ENCODE measurements at regions of chrX and their contacts with region 1.

Region 1: GRCh38 chrX:12447448-12448064 is 309.3 kb downstream of the FRMPD4 start:
- DNase-seq: peak; percentile 80
- H3K4me3 Mint-ChIP-seq: no peak overlapping the region
- H3K27ac Mint-ChIP-seq: peak overlapping the region; percentile 92
- H3K4me1 Mint-ChIP-seq: peaks cover 18% of the 10 kb centered on the region
- H3K27me3 Mint-ChIP-seq: no peaks in the 10 kb centered on the region
- CTCF ChIP-seq: peak; percentile 22

Region 2: DNA sequence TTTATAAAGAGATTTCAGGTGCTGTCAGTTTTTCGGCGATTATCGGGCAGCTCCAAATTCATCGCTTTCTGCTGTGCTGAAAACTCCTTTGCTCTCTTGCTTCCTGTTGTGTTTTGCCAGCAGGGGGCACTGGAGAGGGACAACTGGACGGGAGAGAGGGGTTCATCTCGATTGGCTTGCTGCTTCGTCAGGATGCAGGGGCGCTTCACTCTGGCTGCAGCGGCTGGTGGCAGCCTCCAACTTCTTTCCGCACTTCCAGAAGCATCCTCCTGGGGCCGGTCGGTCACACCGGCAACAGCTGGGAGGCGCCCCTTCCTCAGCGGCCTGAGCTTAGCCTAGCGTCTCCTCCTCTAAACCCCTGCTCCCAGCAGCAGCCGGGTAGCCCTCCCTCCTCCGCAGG is 660.0 kb before region 1 on chrX:
- CTCF ChIA-PET with region 1: no interaction called
- POLR2A ChIA-PET with region 1: no interaction called
- intact Hi-C with region 1: loop called (anchors 10 kb)
- DNase-seq: peak; percentile 67
- H3K4me3 Mint-ChIP-seq: peak overlapping the region; percentile 35
- H3K27ac Mint-ChIP-seq: no peak overlapping the region
- H3K4me1 Mint-ChIP-seq: no peaks in the 10 kb centered on the region
- H3K27me3 Mint-ChIP-seq: peaks cover 10% of the 10 kb centered on the region
- CTCF ChIP-seq: peak; percentile 46

Region 3: DNA sequence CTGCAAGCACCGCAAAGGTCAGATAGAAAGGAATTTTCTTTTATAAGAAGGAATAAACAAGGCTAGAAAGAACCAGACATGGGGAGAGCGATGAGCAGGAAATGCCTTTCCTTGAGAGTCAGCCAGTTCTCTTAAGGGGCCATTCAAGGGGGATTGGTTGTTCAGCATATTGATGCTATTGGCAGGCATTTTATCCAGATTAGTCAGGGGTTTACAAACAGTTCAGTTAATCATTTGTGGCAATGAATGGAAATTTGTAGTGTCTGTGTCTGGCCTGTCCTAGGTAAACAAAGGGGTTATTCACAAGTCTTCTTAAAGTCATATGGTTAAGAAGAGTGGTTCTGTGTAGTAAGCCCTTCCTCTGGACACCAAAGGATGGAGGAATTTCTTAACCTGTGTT is 493.9 kb before region 1 on chrX:
- CTCF ChIA-PET with region 1: no interaction called
- POLR2A ChIA-PET with region 1: no interaction called
- intact Hi-C with region 1: loop called (anchors 10 kb)
- DNase-seq: no peak
- H3K4me3 Mint-ChIP-seq: no peak overlapping the region
- H3K27ac Mint-ChIP-seq: no peak overlapping the region
- H3K4me1 Mint-ChIP-seq: no peaks in the 10 kb centered on the region
- H3K27me3 Mint-ChIP-seq: peaks cover 9% of the 10 kb centered on the region
- CTCF ChIP-seq: no peak

Region 4: DNA sequence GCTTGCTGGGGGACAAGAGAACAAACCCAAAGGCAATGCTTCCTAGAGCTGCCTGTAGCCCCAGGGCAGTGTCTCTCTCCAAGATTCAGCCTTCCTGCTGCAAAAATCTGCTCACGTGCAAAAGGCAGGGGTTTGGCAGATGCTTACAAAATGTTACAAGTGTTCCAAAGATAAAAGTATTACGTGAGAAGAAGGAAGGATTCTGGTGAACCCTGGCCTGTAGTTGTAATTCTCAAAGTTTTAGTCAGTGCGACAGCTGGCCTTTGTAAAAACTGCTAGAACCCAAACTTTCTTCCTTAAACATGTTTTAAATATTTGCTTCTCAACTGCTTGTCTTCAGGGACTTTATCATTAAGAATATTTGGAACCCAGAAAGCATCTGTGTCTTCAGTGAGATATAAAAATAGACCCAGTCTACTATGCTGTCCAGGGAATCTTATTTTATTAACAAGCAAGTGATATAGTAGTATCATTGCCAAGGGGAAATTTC is 77.0 kb before region 1 on chrX:
- CTCF ChIA-PET with region 1: no interaction called
- POLR2A ChIA-PET with region 1: no interaction called
- intact Hi-C with region 1: no loop called
- DNase-seq: peak; percentile 16
- H3K4me3 Mint-ChIP-seq: no peak overlapping the region
- H3K27ac Mint-ChIP-seq: no peak overlapping the region
- H3K4me1 Mint-ChIP-seq: peaks cover 7% of the 10 kb centered on the region
- H3K27me3 Mint-ChIP-seq: no peaks in the 10 kb centered on the region
- CTCF ChIP-seq: no peak

Region 5: DNA sequence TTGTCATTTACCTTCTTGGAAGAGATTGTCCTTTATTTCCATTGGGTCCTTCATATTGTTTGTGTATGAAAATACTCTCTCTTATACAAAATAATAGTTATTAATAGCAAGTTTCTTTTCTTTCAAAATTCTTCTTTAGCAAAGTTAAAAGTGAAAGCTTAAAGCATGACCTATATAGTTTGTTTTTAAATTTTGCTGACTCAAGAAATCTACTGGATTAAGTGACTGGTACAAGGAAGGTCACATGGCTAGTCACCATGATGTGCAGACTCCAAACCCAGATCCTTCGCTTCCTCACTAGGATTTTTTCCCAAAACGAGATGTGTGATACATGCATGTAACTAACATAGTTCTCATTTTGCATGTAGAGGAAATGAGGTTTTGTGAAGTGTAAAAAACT is 13.4 kb after region 1 on chrX:
- CTCF ChIA-PET with region 1: no interaction called
- POLR2A ChIA-PET with region 1: no interaction called
- intact Hi-C with region 1: no loop called
- DNase-seq: no peak
- H3K4me3 Mint-ChIP-seq: no peak overlapping the region
- H3K27ac Mint-ChIP-seq: no peak overlapping the region
- H3K4me1 Mint-ChIP-seq: no peaks in the 10 kb centered on the region
- H3K27me3 Mint-ChIP-seq: no peaks in the 10 kb centered on the region
- CTCF ChIP-seq: no peak

Region 6: DNA sequence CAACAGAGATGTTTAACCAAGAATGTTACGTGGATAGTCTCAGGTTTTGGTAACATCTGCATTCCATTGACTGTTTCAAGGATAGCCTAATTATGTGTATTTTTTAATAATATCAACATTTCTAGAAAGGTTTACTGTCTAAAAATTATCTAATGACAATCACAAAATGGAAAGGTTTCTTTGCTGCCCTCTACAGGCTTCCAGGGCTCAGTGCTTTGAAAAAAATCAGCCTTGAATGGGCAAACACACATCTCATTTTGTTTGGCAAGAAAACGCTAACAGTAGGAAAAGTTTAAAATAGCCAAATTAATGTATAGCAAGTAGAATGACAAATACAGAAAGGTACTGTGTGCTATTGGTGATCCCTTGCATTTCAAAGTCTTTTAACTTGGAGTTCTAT is 120.3 kb after region 1 on chrX:
- CTCF ChIA-PET with region 1: no interaction called
- POLR2A ChIA-PET with region 1: no interaction called
- intact Hi-C with region 1: loop called (anchors 10 kb)
- DNase-seq: peak; percentile 39
- H3K4me3 Mint-ChIP-seq: no peak overlapping the region
- H3K27ac Mint-ChIP-seq: no peak overlapping the region
- H3K4me1 Mint-ChIP-seq: no peaks in the 10 kb centered on the region
- H3K27me3 Mint-ChIP-seq: no peaks in the 10 kb centered on the region
- CTCF ChIP-seq: peak; percentile 51

Measured in MCF 10A (cell line).